PC-3 (cell line): ENCODE measurements at regions of chr17 and their contacts with region 1.

Region 1: GRCh38 chr17:35088881-35089585 is 25.5 kb upstream of the RFFL start:
- DNase-seq: peak; percentile 83
- ATAC-seq: peak; percentile 70
- H3K4me3 ChIP-seq: peak overlapping the region; percentile 88
- H3K27ac ChIP-seq: peak overlapping the region; percentile 99
- H3K4me1 ChIP-seq: peaks cover 41% of the 10 kb centered on the region
- H3K27me3 ChIP-seq: no peaks in the 10 kb centered on the region
- CTCF ChIP-seq: peak; percentile 62

Region 2: GRCh38 chr17:34998205-34998604 is 90.8 kb before region 1 on chr17:
- CTCF ChIA-PET with region 1: no interaction called
- POLR2A ChIA-PET with region 1: no interaction called
- intact Hi-C with region 1: loop called (anchors 1 kb)
- DNase-seq: peak; percentile 66
- ATAC-seq: peak; percentile 80
- H3K4me3 ChIP-seq: no peak overlapping the region
- H3K27ac ChIP-seq: no peak overlapping the region
- H3K4me1 ChIP-seq: peaks cover 13% of the 10 kb centered on the region
- H3K27me3 ChIP-seq: no peaks in the 10 kb centered on the region
- CTCF ChIP-seq: peak; percentile 81

Region 3: DNA sequence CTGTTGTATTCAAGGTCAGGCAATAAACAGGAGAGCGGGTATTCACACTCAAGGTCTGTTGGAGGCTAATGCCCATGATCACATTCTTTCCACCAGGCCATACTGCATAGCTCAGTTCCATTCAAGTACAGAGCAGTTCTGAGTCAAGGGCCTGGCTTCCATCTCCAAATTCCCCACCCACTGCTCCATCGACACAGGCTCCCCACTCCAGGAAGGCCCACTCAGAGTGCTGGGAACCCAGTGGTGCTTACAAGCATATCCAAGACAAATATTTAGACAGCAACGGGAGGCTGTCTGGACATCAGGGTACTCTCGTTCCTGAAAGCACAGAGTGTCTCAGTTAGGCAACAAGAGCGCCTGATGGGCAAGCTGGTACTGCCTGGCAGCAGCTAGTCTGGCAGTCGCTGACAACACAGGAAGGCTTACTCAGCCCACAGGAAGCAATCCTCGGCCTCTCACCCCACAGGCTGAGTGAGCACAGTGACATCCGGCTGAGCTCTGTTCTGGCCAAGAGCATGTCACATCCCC is 66.4 kb before region 1 on chr17:
- CTCF ChIA-PET with region 1: no interaction called
- POLR2A ChIA-PET with region 1: no interaction called
- intact Hi-C with region 1: loop called (anchors 5 kb)
- DNase-seq: peak; percentile 83
- ATAC-seq: peak; percentile 99
- H3K4me3 ChIP-seq: no peak overlapping the region
- H3K27ac ChIP-seq: peak overlapping the region; percentile 87
- H3K4me1 ChIP-seq: peaks cover 38% of the 10 kb centered on the region
- H3K27me3 ChIP-seq: no peaks in the 10 kb centered on the region
- CTCF ChIP-seq: no peak

Region 4: GRCh38 chr17:35063514-35064223 is 25.4 kb before region 1 on chr17 and contains the start of gene RFFL:
- CTCF ChIA-PET with region 1: interaction called, 7 read pairs
- POLR2A ChIA-PET with region 1: interaction called, 3 read pairs
- intact Hi-C with region 1: loop called (anchors 1 kb)
- DNase-seq: peak; percentile 93
- ATAC-seq: peak; percentile 97
- H3K4me3 ChIP-seq: peak within 1 kb of the TSS; percentile 38; the same call in 1 of the 2 replicates
- H3K27ac ChIP-seq: peak within 1 kb of the TSS; percentile 100
- H3K4me1 ChIP-seq: peaks cover 28% of the 10 kb centered on the region
- H3K27me3 ChIP-seq: no peaks in the 10 kb centered on the region
- CTCF ChIP-seq: 0 out of 2 replicates have a peak, but pooled peaks have one; percentile 17
- total RNA-seq, gene RFFL: 37.7 and 46.4 TPM in 2 replicates

Region 5: GRCh38 chr17:35116845-35117244 is 27.8 kb after region 1 on chr17:
- CTCF ChIA-PET with region 1: no interaction called
- POLR2A ChIA-PET with region 1: no interaction called
- intact Hi-C with region 1: no loop called
- DNase-seq: no peak
- ATAC-seq: no peak
- H3K4me3 ChIP-seq: no peak overlapping the region
- H3K27ac ChIP-seq: no peak overlapping the region
- H3K4me1 ChIP-seq: peaks cover 17% of the 10 kb centered on the region
- H3K27me3 ChIP-seq: no peaks in the 10 kb centered on the region
- CTCF ChIP-seq: no peak